T-cell (primary cell): ENCODE measurements at regions of chr7 and their contacts with region 1.

Region 1: GRCh38 chr7:25894902-25895791 is 256.9 kb upstream of the NFE2L3 start:
- DNase-seq: peak; percentile 9 to 76 (median 53)
- ATAC-seq: peak; percentile 60 to 73 (median 61)
- H3K4me3 ChIP-seq: peak overlapping the region; percentile 4 to 39
- H3K4me3 Mint-ChIP-seq: peak overlapping the region; percentile 17 to 93 (median 46)
- H3K27ac ChIP-seq: no peak overlapping the region
- H3K27ac Mint-ChIP-seq: peak overlapping the region in 1 of 2 donors; percentile 23
- H3K4me1 ChIP-seq: peaks cover 0 to 22% of the 10 kb centered on the region in 2 experiments
- H3K4me1 Mint-ChIP-seq: peaks cover 23 to 27% (median 24%) of the 10 kb centered on the region in 3 donors
- H3K27me3 ChIP-seq: peaks cover 0 to 15% of the 10 kb centered on the region in 2 experiments
- H3K27me3 Mint-ChIP-seq: peaks cover 4% of the 10 kb centered on the region in 2 donors

Region 2: DNA sequence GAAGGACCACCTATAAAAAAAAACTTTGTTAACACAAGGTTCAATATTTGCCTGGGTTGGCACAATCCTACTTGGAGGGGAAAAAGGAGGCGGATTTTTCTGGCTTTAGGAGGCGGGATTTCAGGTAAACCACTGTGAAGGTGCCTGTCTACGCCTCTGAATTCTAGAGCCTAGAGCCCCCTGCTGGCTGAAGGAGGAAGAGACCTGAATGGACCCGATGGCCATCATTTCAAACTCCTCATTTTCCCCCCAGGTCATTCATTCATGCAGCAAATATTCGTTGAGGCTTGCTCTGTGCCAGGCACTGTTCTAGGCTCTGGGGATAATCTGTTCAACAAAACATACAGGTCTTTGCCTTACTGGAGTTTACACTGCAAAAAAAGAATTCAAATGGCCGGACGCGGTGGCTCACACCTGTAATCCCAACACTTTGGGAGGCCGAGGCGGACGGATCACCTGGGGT is 166.6 kb after region 1 on chr7:
- CTCF ChIA-PET with region 1: interaction called, 10 to 14 read pairs
- POLR2A ChIA-PET with region 1: no interaction called
- DNase-seq: peak; percentile 10 to 80 (median 57)
- ATAC-seq: peak; percentile 75 to 84 (median 80)
- H3K4me3 ChIP-seq: no peak overlapping the region
- H3K4me3 Mint-ChIP-seq: no peak overlapping the region
- H3K27ac ChIP-seq: no peak overlapping the region
- H3K27ac Mint-ChIP-seq: no peak overlapping the region
- H3K4me1 ChIP-seq: no peaks in the 10 kb centered on the region
- H3K4me1 Mint-ChIP-seq: peaks cover 2 to 8% (median 4%) of the 10 kb centered on the region in 3 donors
- H3K27me3 ChIP-seq: peaks cover 0 to 18% of the 10 kb centered on the region in 2 experiments
- H3K27me3 Mint-ChIP-seq: peaks cover 28 to 35% of the 10 kb centered on the region in 2 donors

Region 3: DNA sequence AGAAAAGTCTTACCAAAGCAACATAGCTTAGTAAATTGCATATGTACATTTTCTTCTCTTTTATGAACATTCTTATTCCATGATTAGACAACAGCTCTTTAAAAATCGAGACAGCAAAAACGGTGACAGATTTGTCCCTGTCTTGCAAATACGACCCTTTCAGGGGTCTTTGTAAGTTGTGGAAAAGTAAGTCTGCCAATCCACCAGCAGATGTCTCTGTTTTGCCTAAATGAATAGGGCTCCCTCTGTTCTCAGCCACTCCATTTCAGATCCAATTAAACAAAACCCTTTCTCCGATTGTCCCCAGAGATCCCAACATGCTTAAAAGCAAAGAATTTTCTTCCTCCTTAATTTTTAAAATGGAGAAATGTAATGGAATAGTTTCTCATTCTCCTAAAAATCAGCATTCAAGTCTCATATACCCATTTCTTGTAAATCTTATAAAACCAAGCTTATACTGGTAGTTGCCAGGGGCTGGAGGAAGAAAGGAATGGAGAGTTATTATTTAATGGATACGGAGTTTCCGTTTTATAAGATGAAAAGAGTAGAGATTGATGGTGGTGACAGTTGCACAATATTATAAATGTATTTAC is 195.9 kb after region 1 on chr7:
- CTCF ChIA-PET with region 1: interaction called, 5 to 11 read pairs
- POLR2A ChIA-PET with region 1: no interaction called
- DNase-seq: peak in 2 of 35 experiments; percentile 9 to 69
- ATAC-seq: peak; percentile 57 to 75 (median 68)
- H3K4me3 ChIP-seq: no peak overlapping the region
- H3K4me3 Mint-ChIP-seq: peak overlapping the region in 1 of 3 donors; percentile 6
- H3K27ac ChIP-seq: no peak overlapping the region
- H3K27ac Mint-ChIP-seq: peak overlapping the region in 1 of 2 donors; percentile 62
- H3K4me1 ChIP-seq: no peaks in the 10 kb centered on the region
- H3K4me1 Mint-ChIP-seq: peaks cover 16 to 26% (median 24%) of the 10 kb centered on the region in 3 donors
- H3K27me3 ChIP-seq: no peaks in the 10 kb centered on the region
- H3K27me3 Mint-ChIP-seq: no peaks in the 10 kb centered on the region

Region 4: GRCh38 chr7:26200444-26201246 is 305.5 kb after region 1 on chr7 and contains the start of gene HNRNPA2B1:
- CTCF ChIA-PET with region 1: interaction called, 4 to 23 read pairs
- POLR2A ChIA-PET with region 1: interaction called in 1 of 2 experiments, 7 read pairs
- DNase-seq: peak; percentile 96 to 100 (median 98)
- ATAC-seq: peak; percentile 68 to 76 (median 71)
- H3K4me3 ChIP-seq: peak within 1 kb of the TSS; percentile 95 to 97
- H3K4me3 Mint-ChIP-seq: peak within 1 kb of the TSS; percentile 96 to 100 (median 100)
- H3K27ac ChIP-seq: peak within 1 kb of the TSS; percentile 99
- H3K27ac Mint-ChIP-seq: peak within 1 kb of the TSS; percentile 99 to 100
- H3K4me1 ChIP-seq: peaks cover 19 to 56% of the 10 kb centered on the region in 2 experiments
- H3K4me1 Mint-ChIP-seq: peaks cover 50 to 74% (median 51%) of the 10 kb centered on the region in 3 donors
- H3K27me3 ChIP-seq: no peaks in the 10 kb centered on the region
- H3K27me3 Mint-ChIP-seq: peaks cover 0 to 2% of the 10 kb centered on the region in 2 donors
- total RNA-seq, gene HNRNPA2B1: 388 to 478 (median 411) TPM

Region 5: DNA sequence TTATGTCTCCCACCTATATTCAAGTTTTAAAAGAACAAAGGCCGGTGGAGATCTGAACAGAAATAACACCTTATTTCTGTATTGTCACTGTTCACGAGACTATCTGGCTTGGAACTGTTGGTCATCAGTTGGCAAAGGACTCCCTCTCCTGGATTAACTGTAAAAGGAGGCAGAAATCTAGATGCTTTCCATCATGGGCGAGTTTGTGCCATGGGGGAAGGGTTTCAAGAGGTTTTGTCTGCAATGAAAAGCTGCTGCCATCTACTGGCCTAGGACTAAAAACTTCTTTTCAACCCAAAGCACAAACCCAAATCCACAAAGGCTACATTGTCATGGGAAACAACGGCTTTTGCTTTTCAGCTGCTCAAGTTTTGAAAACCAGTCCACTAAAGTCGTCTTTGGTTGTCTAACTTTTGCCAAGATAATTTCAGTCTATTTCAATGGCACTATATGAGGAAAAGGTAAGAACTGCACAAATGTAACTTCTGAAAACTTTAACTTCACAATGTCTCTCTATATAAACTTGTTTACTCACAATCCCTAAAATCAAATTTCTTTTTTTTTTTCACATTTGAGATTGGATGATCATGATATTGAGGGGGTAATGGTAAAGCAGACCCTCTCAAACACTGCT is 772.5 kb after region 1 on chr7:
- CTCF ChIA-PET with region 1: interaction called, 5 to 11 read pairs
- POLR2A ChIA-PET with region 1: no interaction called
- DNase-seq: peak in 33 of 35 experiments; percentile 3 to 79 (median 33)
- ATAC-seq: peak in 3 of 4 experiments; percentile 40 to 59 (median 58)
- H3K4me3 ChIP-seq: no peak overlapping the region
- H3K4me3 Mint-ChIP-seq: no peak overlapping the region
- H3K27ac ChIP-seq: no peak overlapping the region
- H3K27ac Mint-ChIP-seq: no peak overlapping the region
- H3K4me1 ChIP-seq: peaks cover 0 to 3% of the 10 kb centered on the region in 2 experiments
- H3K4me1 Mint-ChIP-seq: peaks cover 17 to 24% (median 20%) of the 10 kb centered on the region in 3 donors
- H3K27me3 ChIP-seq: no peaks in the 10 kb centered on the region
- H3K27me3 Mint-ChIP-seq: peaks cover 12 to 15% of the 10 kb centered on the region in 2 donors

Region 6: GRCh38 chr7:27160546-27161213 is 1265.5 kb after region 1 on chr7:
- CTCF ChIA-PET with region 1: interaction called, 3 to 20 read pairs
- POLR2A ChIA-PET with region 1: interaction called in 1 of 2 experiments, 3 read pairs
- DNase-seq: peak; percentile 50 to 92 (median 79)
- ATAC-seq: peak; percentile 70 to 85 (median 74)
- H3K4me3 ChIP-seq: peak overlapping the region; percentile 57 to 81
- H3K4me3 Mint-ChIP-seq: peak overlapping the region; percentile 43 to 73 (median 63)
- H3K27ac ChIP-seq: no peak overlapping the region
- H3K27ac Mint-ChIP-seq: no peak overlapping the region
- H3K4me1 ChIP-seq: peaks cover 2 to 61% of the 10 kb centered on the region in 2 experiments
- H3K4me1 Mint-ChIP-seq: peaks cover 35 to 41% (median 40%) of the 10 kb centered on the region in 3 donors
- H3K27me3 ChIP-seq: peaks cover 2 to 90% of the 10 kb centered on the region in 2 experiments
- H3K27me3 Mint-ChIP-seq: peaks cover 49 to 82% of the 10 kb centered on the region in 2 donors